K562 (cell line): ENCODE measurements at regions of chr3 and their contacts with region 1.

Region 1: GRCh38 chr3:5767304-5767703 is 579.8 kb downstream of the EDEM1 start:
- DNase-seq: peak; percentile 53 to 74 (median 68)
- ATAC-seq: peak; percentile 91
- H3K4me3 ChIP-seq: no peak overlapping the region
- H3K27ac ChIP-seq: peak overlapping the region; percentile 60; the same call in 2 of the 3 replicates
- H3K4me1 ChIP-seq: peaks cover 9 to 31% of the 10 kb centered on the region in 2 experiments
- H3K27me3 ChIP-seq: no peaks in the 10 kb centered on the region
- CTCF ChIP-seq: no peak
- EP300 ChIP-seq: peak; percentile 83
- POLR2A ChIP-seq: no peak
- RAD21 ChIP-seq: 0 out of 4 replicates have a peak, but pooled peaks of 1 of the 2 experiments have one; percentile 4

Region 2: DNA sequence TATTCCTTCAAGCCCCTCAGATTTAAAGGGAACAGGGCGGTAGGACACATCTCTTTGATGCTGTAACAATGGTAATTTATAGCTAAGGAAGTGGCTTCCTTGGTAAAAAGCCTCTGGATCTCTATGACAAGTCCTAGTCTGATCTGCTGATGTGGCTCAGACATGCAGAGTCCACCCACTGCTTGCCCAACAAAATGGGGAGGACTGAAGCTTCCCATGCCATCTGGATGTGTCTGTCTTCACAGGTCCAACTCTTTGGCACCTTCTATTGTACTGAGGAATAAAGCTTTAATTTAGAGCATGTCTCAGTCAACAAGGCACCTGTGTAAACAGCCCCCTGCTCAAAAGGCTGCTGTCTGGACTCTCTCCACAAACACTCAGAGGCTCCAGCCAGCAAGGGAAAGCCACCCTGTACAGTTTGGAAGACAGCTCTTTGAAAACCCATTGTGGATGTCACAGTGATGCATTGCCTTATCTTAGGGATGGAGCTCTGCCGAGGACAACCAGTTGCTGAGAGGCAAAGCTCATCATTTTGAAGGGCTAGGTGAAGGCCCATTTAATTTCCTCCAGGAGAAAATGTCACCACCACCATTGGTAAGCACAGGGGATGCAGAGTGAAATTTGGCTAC is 745.0 kb after region 1 on chr3:
- CTCF ChIA-PET with region 1: no interaction called
- POLR2A ChIA-PET with region 1: no interaction called
- in situ Hi-C with region 1: no loop called
- intact Hi-C with region 1: loop called (anchors 10 kb)
- DNase-seq: no peak
- ATAC-seq: peak; percentile 11
- H3K4me3 ChIP-seq: no peak overlapping the region
- H3K27ac ChIP-seq: no peak overlapping the region; the same call in 2 of the 3 replicates
- H3K4me1 ChIP-seq: peaks cover 0 to 33% of the 10 kb centered on the region in 2 experiments; a peak in 3 of 5 replicates
- H3K27me3 ChIP-seq: no peaks in the 10 kb centered on the region
- CTCF ChIP-seq: no peak
- EP300 ChIP-seq: no peak
- POLR2A ChIP-seq: no peak
- RAD21 ChIP-seq: no peak